ENCODE measurements at regions of chr14 and their contacts with region 1.

Region 1: DNA sequence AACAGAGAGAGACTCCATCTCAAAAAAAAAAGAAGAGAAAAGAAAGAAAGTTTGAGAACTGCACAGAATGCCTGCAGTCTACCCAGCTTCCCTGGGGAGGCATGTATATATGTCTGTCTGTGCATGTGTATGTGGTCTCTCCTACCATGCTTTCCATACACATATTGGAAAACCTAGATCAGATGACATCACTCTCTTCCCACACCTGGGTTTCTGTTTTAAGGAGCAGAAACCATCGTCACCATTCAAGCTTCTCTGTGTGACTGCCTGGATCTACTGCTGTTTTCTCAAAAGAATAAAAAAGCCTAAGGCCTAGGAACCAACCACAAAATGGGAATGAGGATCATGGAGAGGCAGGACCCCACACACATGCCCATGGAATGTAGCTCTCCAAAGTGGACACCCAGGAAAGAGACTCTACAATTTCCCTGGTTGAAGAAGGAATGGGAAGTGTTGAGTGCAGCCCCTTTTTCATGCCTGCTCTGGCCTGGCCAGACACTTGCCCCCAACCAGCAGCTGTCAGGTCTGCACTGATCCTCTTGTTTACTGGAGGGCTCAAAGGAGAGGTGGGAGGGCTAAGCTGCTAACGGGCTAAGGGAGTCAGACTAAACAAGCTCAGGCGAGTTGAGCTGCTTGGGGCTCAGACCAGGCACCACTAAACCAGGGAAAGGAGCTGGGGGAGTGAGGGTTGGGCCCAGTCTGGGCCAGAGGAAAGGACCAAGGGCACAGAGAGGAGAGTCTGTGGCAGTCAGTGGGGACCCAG is 7.7 kb upstream of the PCK2 start:
- DNase-seq: no peak
- H3K4me3 ChIP-seq: no peak overlapping the region
- CTCF ChIP-seq: no peak

Region 2: DNA sequence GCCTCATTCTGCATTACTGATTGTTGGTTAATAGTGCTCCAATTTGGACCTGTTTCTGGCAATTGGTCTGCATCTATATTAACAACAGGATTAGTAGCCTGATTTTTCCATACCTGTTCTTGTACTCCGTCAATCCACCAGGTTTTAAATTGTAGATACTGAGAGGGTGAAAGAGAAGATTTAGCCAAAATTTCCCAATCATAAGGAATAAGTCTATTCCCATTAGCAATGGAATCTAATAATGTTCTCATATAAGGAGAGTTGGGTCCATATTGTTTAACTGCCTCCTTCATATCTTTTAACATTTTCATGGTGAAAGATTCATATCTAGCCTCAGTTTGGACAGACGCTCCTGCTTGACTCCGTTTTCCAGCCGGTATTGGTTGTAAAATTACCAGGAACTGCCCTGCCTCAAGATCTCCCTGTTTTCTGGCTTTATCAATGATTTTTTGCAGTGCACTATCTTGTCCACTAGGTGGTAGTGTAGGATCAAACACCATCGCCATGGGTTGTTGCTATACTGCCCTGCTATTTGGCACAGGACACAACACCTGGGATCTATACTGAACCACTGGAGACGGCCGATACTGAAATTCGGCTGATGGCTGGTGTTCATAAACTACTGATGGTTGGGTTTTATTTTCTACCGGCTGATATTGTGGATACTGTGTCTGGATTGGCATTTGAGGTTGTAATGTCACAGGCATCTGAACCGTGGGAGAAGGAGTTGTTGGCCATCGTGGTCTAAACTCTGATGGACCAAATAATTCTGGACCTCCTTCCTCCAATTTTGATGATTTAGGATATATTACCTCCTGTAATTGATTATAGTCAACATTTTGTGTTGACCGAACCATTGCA is 72.5 kb before region 1 on chr14:
- CTCF ChIA-PET with region 1: interaction called, 26 read pairs
- POLR2A ChIA-PET with region 1: no interaction called
- DNase-seq: no peak
- H3K4me3 ChIP-seq: no peak overlapping the region
- CTCF ChIP-seq: peak; percentile 75